ENCODE measurements at regions of chr10 and their contacts with region 1.

Region 1: GRCh38 chr10:88386821-88387773 is 196.0 kb downstream of the RNLS start:
- DNase-seq: peak; percentile 61
- H3K4me3 ChIP-seq: peak overlapping the region in 3 of 4 donors; percentile 8 to 27 (median 23)
- H3K27ac ChIP-seq: peak overlapping the region; percentile 48 to 63 (median 52)
- H3K4me1 ChIP-seq: peaks cover 0 to 29% (median 18%) of the 10 kb centered on the region in 4 donors
- H3K27me3 ChIP-seq: no peaks in the 10 kb centered on the region
- CTCF ChIP-seq: no peak
- EP300 ChIP-seq: no peak
- POLR2A ChIP-seq: no peak

Region 2: DNA sequence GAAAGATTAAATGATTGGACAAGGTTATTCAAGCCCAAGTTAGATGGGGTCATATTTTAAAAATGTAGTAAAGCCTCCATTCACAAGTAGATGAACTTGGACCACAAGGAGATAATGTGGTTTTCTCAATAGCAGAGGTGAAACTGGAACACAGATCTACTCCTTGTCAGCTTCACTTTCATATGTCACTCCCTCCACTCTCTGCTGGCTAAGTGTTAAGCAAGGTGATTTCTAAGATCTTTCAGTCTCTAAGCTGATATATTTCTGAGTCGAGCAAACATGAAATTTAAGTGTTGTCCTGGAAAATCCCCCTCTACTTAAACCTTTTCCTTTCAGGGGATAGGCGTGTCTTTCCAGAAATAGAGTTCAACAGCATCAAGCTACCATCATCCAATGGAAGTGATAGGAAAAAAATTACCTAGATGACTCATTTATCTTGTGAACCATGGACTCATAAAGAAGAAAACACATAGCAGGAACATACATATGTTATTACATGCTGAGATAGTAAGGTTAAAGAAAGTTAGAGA is 248.7 kb before region 1 on chr10:
- intact Hi-C with region 1: loop called (anchors 10 kb)
- DNase-seq: no peak
- H3K4me3 ChIP-seq: no peak overlapping the region
- H3K27ac ChIP-seq: no peak overlapping the region
- H3K4me1 ChIP-seq: no peaks in the 10 kb centered on the region
- H3K27me3 ChIP-seq: no peaks in the 10 kb centered on the region
- CTCF ChIP-seq: no peak
- EP300 ChIP-seq: no peak
- POLR2A ChIP-seq: no peak